Breast epithelium (tissue), 4 donors: ENCODE measurements at regions of chr19 and their contacts with region 1.

Region 1: GRCh38 chr19:37519890-37520289 is 13.2 kb downstream of the ZNF793 start:
- DNase-seq: no peak
- H3K4me3 ChIP-seq: no peak overlapping the region
- H3K27ac ChIP-seq: no peak overlapping the region
- H3K4me1 ChIP-seq: no peaks in the 10 kb centered on the region
- H3K27me3 ChIP-seq: no peaks in the 10 kb centered on the region
- CTCF ChIP-seq: no peak
- POLR2A ChIP-seq: no peak

Region 2: DNA sequence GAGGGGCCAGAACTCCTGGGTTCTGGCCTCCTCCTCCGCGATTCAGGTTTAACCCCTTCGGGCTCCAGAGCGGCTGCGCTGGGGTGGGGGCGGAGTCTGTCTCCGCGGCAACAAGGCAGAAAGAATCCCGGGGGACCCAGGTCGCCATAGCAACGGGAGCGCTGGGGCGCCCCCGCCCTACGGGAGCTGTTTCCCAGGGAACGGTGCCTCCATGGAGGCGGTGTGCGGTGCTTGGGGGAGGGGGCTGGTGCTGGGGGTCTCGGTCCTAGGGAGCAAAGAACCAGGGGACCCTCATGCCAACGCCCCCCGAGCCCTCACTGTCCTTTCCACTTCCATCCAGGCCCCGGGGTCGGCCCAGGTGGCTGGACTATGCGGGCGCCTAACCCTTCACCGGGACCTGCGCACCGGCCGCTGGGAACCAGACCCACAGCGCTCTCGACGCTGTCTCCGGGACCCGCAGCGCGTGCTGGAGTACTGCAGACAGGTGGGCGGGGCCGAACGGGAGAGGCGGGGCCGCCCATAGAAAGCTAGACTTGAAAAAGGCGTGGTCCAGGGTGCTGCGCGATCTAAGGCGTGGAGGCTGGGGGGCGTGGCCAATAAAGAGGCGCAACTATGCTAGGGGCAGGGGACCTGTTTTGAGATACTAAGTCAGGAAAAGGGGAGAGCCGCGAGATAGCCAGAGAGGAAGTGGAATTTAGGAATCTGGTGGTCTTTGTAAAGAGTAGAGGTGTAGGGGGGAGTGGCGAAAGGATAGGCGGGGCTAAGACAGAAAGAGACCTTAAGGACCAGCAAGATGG is 1650.4 kb before region 1 on chr19:
- intact Hi-C with region 1: loop called (anchors 10 kb)
- DNase-seq: peak in 1 of 2 donors; percentile 42
- H3K4me3 ChIP-seq: peak overlapping the region in 2 of 3 donors; percentile 54 to 65
- H3K27ac ChIP-seq: no peak overlapping the region
- H3K4me1 ChIP-seq: peaks cover 6 to 13% of the 10 kb centered on the region in 2 donors
- H3K27me3 ChIP-seq: peaks cover 3 to 10% of the 10 kb centered on the region in 2 donors
- CTCF ChIP-seq: no peak
- POLR2A ChIP-seq: no peak